ENCODE measurements at regions of chr16 and their contacts with region 1.

Region 1: GRCh38 chr16:685967-686366 is 1.8 kb upstream of the JMJD8 start:
- DNase-seq: no peak
- H3K4me3 ChIP-seq: no peak overlapping the region
- H3K27ac ChIP-seq: no peak overlapping the region
- H3K4me1 ChIP-seq: peaks cover 25 to 45% of the 10 kb centered on the region in 2 donors
- H3K27me3 ChIP-seq: no peaks in the 10 kb centered on the region
- CTCF ChIP-seq: peak in 1 of 3 donors; percentile 8
- POLR2A ChIP-seq: no peak

Region 2: DNA sequence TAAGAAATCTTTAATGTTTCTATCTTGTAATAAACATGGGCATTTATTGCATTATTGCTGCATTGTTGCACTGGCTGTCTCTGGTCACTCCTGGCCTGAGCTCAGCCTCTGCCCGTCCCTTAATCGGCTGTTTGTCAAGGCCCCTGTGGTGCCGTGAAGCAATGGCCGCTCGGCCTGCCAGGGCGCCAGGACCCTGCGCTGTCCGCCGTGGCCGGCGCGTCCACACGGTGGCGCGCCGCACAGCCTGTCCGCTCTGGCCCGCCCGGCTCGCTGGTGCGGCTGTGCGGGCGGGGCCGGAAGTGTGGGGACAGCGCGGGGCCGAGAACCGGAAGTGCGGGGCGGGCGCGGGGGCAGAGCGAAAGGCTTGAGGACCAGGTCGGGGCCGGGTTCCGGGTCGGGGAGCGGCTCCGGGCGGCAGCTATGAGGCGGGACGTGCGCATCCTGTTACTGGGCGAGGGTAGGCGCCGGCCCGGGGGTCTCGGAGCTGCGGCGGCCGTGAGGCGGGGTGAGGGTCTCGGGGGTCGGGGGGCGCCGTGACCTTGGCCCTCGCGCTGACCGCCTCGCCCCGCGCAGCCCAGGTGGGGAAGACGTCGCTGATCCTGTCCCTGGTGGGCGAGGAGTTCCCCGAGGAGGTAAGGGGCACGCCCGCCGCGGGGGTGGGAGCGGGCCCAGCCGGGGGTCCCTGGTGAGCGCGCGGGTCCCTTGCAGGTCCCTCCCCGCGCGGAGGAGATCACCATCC is 18.0 kb before region 1 on chr16 and contains the start of gene RHOT2:
- intact Hi-C with region 1: loop called (anchors 1 kb)
- DNase-seq: peak; percentile 91 to 93
- H3K4me3 ChIP-seq: peak within 1 kb of the TSS; percentile 90 to 97 (median 93)
- H3K27ac ChIP-seq: peak within 1 kb of the TSS; percentile 87
- H3K4me1 ChIP-seq: peaks cover 0 to 5% of the 10 kb centered on the region in 2 donors
- H3K27me3 ChIP-seq: no peaks in the 10 kb centered on the region
- CTCF ChIP-seq: peak; percentile 57 to 93 (median 58)
- POLR2A ChIP-seq: peak; percentile 57
- total RNA-seq, gene RHOT2: 39.4 to 90.8 (median 66.9) TPM